ENCODE measurements at regions of chr14 and their contacts with region 1.

Region 1: GRCh38 chr14:95534299-95535225 is at the start of gene GLRX5:
- DNase-seq: peak; percentile 100
- ATAC-seq: peak; percentile 93
- H3K4me3 ChIP-seq: peak within 1 kb of the TSS; percentile 84 to 96 (median 88)
- H3K27ac ChIP-seq: peak within 1 kb of the TSS; percentile 87
- H3K4me1 ChIP-seq: peaks cover 49% of the 10 kb centered on the region
- H3K27me3 ChIP-seq: peaks cover 0 to 2% of the 10 kb centered on the region in 2 experiments; a peak in 1 of 5 replicates
- CTCF ChIP-seq: no peak
- EP300 ChIP-seq: peak in 1 of 2 experiments; percentile 13; a peak in 2 of 4 replicates
- POLR2A ChIP-seq: peak; percentile 62 to 74
- RAD21 ChIP-seq: peak; percentile 35; the same call in 1 of the 2 replicates
- total RNA-seq, gene GLRX5: 115 and 122 TPM in 2 replicates

Region 2: DNA sequence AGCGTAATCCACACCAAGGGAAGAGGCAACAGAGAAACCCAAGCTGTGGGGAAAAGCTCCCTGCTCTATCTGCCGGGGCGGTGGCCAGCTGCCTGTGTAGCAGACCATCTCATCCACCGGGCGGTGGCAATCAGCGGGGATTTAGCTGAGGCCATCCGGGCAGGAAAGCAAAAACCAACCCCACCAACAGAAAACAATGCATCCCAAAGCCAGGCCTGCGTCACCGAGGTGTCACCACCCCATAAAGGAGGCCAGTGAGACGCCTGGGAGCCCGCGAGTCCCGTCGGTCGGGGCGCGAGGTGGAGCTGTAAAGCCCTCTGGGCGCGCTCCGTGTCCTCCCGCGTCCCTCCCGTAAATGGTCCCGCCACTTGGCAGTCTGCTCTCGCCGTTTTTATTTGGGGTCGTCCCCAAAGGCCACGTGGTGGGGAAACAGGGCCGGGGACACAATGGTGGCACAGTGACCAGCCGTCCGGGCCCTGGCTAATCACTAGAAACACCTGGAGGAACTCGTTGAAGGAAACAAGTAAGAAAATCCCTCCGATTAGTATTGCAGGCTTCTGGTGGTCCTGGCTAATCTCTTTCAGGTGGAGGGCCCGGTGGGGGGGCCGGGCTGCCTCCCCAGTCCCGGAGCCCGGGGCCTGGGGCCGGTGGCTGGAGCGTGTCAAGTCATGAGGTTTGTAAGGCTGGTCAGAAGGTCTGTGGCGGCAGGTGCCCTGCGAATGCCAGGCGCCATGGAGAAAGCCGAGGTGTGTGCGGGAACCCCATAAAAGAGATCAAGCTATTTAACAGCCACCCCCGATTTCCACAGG is 670.0 kb before region 1 on chr14:
- CTCF ChIA-PET with region 1: no interaction called
- POLR2A ChIA-PET with region 1: no interaction called
- in situ Hi-C with region 1: no loop called
- intact Hi-C with region 1: no loop called
- DNase-seq: no peak
- ATAC-seq: no peak; the same call in 2 of the 3 replicates
- H3K4me3 ChIP-seq: no peak overlapping the region
- H3K27ac ChIP-seq: no peak overlapping the region
- H3K4me1 ChIP-seq: no peaks in the 10 kb centered on the region
- H3K27me3 ChIP-seq: peaks cover 1 to 24% of the 10 kb centered on the region in 2 experiments; a peak in 1 of 5 replicates
- CTCF ChIP-seq: no peak
- EP300 ChIP-seq: no peak
- POLR2A ChIP-seq: no peak
- RAD21 ChIP-seq: no peak

Region 3: GRCh38 chr14:95545179-95546168 is 10.9 kb after region 1 on chr14:
- CTCF ChIA-PET with region 1: no interaction called
- POLR2A ChIA-PET with region 1: interaction called, 183 read pairs
- in situ Hi-C with region 1: no loop called
- intact Hi-C with region 1: loop called (anchors 1 kb)
- DNase-seq: no peak
- ATAC-seq: no peak
- H3K4me3 ChIP-seq: no peak overlapping the region
- H3K27ac ChIP-seq: no peak overlapping the region
- H3K4me1 ChIP-seq: peaks cover 75% of the 10 kb centered on the region
- H3K27me3 ChIP-seq: no peaks in the 10 kb centered on the region
- CTCF ChIP-seq: no peak
- EP300 ChIP-seq: no peak
- POLR2A ChIP-seq: no peak
- RAD21 ChIP-seq: no peak

Region 4: DNA sequence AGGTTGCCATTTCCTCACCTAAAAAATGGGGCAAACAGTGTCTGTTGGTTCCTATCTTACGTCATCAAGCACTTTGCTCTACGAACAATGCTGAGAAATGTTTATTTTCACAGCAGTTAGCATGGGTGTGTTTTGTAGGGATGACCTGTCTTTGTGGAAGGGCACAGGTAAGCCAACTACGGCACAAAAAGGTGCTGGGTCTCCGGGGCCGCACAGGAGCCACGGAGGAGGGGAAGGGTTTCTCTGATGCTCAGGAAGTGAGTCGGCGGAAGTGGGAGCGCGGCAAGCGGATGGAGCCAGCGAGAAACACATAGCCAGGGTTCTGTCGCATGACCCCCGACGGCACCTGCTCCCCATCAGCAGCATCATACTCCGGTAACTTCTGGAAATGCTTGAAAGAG is 86.1 kb after region 1 on chr14:
- CTCF ChIA-PET with region 1: no interaction called
- POLR2A ChIA-PET with region 1: no interaction called
- in situ Hi-C with region 1: no loop called
- intact Hi-C with region 1: no loop called
- DNase-seq: no peak
- ATAC-seq: no peak
- H3K4me3 ChIP-seq: no peak overlapping the region
- H3K27ac ChIP-seq: no peak overlapping the region
- H3K4me1 ChIP-seq: no peaks in the 10 kb centered on the region
- H3K27me3 ChIP-seq: no peaks in the 10 kb centered on the region
- CTCF ChIP-seq: no peak
- EP300 ChIP-seq: no peak
- POLR2A ChIP-seq: no peak
- RAD21 ChIP-seq: no peak